T-cell (primary cell): ENCODE measurements at regions of chr2 and their contacts with region 1.

Region 1: GRCh38 chr2:186523791-186524190 is 37.7 kb downstream of the ZC3H15 start:
- DNase-seq: no peak
- ATAC-seq: no peak
- H3K4me3 ChIP-seq: no peak overlapping the region
- H3K4me3 Mint-ChIP-seq: no peak overlapping the region
- H3K27ac ChIP-seq: no peak overlapping the region
- H3K27ac Mint-ChIP-seq: peak overlapping the region in 1 of 2 donors; percentile 13
- H3K4me1 ChIP-seq: no peaks in the 10 kb centered on the region
- H3K4me1 Mint-ChIP-seq: no peaks in the 10 kb centered on the region
- H3K27me3 ChIP-seq: no peaks in the 10 kb centered on the region
- H3K27me3 Mint-ChIP-seq: no peaks in the 10 kb centered on the region

Region 2: DNA sequence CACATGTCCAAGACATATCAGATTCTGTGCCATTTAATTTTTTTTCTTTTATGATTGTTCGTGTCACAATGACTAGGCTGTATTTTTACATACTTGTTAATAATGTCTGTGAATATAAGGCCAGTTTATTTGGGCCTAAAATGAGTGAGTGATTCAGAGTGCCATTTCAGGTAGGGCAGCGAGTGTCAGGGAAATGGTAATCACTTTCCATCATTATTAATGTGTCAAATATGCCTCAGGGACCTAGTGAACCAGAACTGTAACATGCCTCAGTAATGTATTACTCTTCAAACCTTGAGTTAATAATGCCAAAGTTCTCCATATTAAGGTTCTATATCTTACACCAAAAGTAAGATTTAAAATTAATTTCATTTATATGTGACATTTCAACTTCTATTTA is 178.7 kb after region 1 on chr2:
- CTCF ChIA-PET with region 1: no interaction called
- POLR2A ChIA-PET with region 1: no interaction called
- DNase-seq: no peak
- ATAC-seq: no peak
- H3K4me3 ChIP-seq: no peak overlapping the region
- H3K4me3 Mint-ChIP-seq: no peak overlapping the region
- H3K27ac ChIP-seq: no peak overlapping the region
- H3K27ac Mint-ChIP-seq: no peak overlapping the region
- H3K4me1 ChIP-seq: no peaks in the 10 kb centered on the region
- H3K4me1 Mint-ChIP-seq: no peaks in the 10 kb centered on the region
- H3K27me3 ChIP-seq: no peaks in the 10 kb centered on the region
- H3K27me3 Mint-ChIP-seq: peaks cover 8 to 26% of the 10 kb centered on the region in 2 donors

Region 3: DNA sequence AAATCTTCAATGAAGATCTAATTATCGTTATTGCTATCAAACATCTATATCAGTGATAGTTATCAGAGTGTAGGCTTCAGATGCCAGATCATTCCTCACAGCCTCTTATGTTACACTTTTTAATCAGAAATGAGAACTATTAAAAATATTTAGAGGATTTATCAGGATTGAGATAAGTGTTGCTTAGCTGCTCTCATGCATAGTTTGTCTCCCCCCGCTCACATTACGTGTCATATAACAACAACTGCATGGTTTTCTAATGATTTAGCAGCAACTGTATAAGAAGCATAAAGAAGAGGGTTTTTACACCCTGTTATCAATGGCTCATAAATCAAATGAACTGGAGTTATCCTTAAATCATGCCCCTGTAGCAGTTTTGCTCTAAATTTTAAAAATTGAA is 285.0 kb after region 1 on chr2:
- CTCF ChIA-PET with region 1: interaction called in 1 of 2 experiments, 10 read pairs
- POLR2A ChIA-PET with region 1: no interaction called
- DNase-seq: no peak
- ATAC-seq: no peak
- H3K4me3 ChIP-seq: no peak overlapping the region
- H3K4me3 Mint-ChIP-seq: no peak overlapping the region
- H3K27ac ChIP-seq: no peak overlapping the region
- H3K27ac Mint-ChIP-seq: no peak overlapping the region
- H3K4me1 ChIP-seq: no peaks in the 10 kb centered on the region
- H3K4me1 Mint-ChIP-seq: no peaks in the 10 kb centered on the region
- H3K27me3 ChIP-seq: peaks cover 0 to 10% of the 10 kb centered on the region in 2 experiments
- H3K27me3 Mint-ChIP-seq: peaks cover 0 to 6% of the 10 kb centered on the region in 2 donors